SK-N-SH (cell line): ENCODE measurements at regions of chr2 and their contacts with region 1.

Region 1: DNA sequence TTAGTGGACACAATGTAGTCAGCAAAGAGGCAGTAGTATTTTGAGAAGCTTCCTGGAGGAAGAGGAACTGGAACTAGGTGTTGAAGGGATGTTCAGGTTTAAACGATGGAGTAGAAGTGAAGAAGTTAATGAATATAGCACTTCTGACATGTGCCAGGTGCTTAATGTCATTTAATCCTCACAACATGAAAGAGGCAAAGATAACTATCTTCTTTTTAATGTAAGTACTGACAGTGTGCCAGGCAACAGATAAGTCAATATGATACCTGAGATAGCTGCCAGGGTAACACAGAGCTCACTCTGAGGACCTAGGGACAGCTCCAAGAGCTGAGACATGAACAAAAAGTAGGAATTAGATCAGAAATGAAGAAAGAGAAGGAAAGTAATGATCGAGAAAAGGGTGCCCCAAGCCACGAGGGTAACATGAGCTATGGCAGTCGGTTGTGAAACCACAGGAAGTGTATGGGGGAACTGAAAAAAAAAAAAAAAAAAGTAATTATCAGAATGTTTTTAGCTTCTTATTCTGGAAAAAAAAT is 140.7 kb downstream of the RNF144A start:
- DNase-seq: no peak
- H3K4me3 ChIP-seq: no peak overlapping the region
- H3K27ac ChIP-seq: peak overlapping the region in 1 of 2 experiments; percentile 45; a peak in 2 of 4 replicates
- H3K4me1 ChIP-seq: peaks cover 0 to 50% of the 10 kb centered on the region in 2 experiments; a peak in 2 of 4 replicates
- H3K27me3 ChIP-seq: no peaks in the 10 kb centered on the region
- CTCF ChIP-seq: no peak
- EP300 ChIP-seq: peak in 1 of 2 experiments; percentile 85; a peak in 2 of 4 replicates
- RAD21 ChIP-seq: no peak

Region 2: DNA sequence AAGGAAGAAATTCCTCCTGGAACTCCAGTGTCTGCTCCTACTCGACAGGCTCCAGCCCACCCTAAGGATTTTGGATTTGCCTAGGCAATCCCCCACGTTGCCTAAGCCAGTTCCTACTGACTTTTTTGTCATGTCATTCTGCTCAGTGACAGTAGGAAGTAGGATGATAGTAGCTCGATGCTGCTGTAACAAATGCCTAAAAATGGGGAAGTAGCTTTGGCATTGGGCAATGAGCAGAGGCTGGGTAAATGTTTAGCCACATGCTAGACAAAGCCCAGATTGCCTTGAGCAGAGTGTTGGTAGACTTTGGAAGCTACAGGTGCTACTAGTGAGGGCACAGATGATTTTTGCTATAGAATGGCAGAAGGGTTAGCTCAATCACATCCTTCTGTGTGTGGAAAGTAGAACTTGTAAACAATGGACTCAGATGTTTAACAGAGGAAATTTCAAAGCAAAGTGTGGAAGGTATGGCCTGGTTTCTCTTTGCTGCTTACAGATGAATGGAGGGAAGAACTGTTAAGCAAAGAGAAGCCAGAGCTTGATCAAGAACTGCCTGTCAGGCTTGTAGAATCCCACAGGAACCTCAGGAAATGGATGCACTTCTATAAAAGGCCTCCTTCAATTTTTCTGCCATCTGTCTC is 14.1 kb after region 1 on chr2:
- CTCF ChIA-PET with region 1: interaction called, 13 read pairs
- POLR2A ChIA-PET with region 1: interaction called, 11 read pairs
- DNase-seq: no peak
- H3K4me3 ChIP-seq: no peak overlapping the region
- H3K27ac ChIP-seq: no peak overlapping the region
- H3K4me1 ChIP-seq: peaks cover 0 to 47% of the 10 kb centered on the region in 2 experiments; a peak in 2 of 4 replicates
- H3K27me3 ChIP-seq: no peaks in the 10 kb centered on the region
- CTCF ChIP-seq: no peak
- EP300 ChIP-seq: no peak
- RAD21 ChIP-seq: no peak

Region 3: GRCh38 chr2:7083577-7084509 is 25.9 kb after region 1 on chr2:
- CTCF ChIA-PET with region 1: interaction called, 19 read pairs
- POLR2A ChIA-PET with region 1: no interaction called
- DNase-seq: no peak
- H3K4me3 ChIP-seq: no peak overlapping the region; a peak in 1 of 4 replicates
- H3K27ac ChIP-seq: no peak overlapping the region
- H3K4me1 ChIP-seq: no peaks in the 10 kb centered on the region
- H3K27me3 ChIP-seq: no peaks in the 10 kb centered on the region
- CTCF ChIP-seq: peak; percentile 58
- EP300 ChIP-seq: no peak
- RAD21 ChIP-seq: peak; percentile 71